ENCODE measurements at regions of chr11 and their contacts with region 1.

Region 1: DNA sequence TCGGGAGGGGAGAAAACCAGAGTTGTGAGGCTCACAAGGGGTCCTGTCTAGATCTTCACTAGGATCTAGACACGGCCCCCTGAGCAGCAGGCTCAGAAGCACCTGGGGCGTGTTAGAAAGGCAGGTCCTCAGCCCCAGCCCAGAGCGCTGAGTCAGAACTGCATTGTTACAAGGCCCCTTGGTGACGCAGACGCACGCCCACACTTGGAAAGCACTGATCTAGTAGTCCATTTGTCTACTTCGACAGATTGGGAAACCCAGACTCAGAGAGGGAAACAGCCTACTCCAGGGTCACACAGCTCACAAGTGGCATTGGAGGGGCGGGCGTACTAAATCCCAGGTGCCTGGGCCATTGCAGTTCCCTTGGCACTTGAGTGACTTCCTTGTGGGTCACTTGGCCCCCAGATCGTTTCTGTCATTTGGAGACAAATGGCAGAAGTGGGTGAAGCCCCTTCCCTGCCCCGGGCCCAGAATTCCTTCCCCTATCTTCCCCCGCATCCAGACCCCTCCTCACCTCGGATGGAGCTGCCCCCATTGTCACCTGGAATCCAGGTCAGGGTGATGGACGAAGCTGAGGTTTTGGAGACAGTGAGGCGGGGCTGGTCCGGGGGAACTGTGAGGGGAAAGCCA is 110.8 kb downstream of the CEP164 start:
- DNase-seq: no peak
- ATAC-seq: no peak
- H3K4me3 ChIP-seq: no peak overlapping the region
- H3K27ac ChIP-seq: no peak overlapping the region
- H3K4me1 ChIP-seq: no peaks in the 10 kb centered on the region
- H3K27me3 ChIP-seq: no peaks in the 10 kb centered on the region
- CTCF ChIP-seq: no peak
- POLR2A ChIP-seq: no peak

Region 2: GRCh38 chr11:116927163-116927974 is 511.1 kb before region 1 on chr11:
- intact Hi-C with region 1: no loop called
- DNase-seq: no peak
- ATAC-seq: no peak
- H3K4me3 ChIP-seq: no peak overlapping the region
- H3K27ac ChIP-seq: no peak overlapping the region
- H3K4me1 ChIP-seq: peaks cover 0 to 34% (median 16%) of the 10 kb centered on the region in 4 donors
- H3K27me3 ChIP-seq: no peaks in the 10 kb centered on the region
- CTCF ChIP-seq: peak in 3 of 4 donors; percentile 4 to 14 (median 12)
- POLR2A ChIP-seq: no peak

Region 3: GRCh38 chr11:117807482-117808327 is 369.2 kb after region 1 on chr11:
- intact Hi-C with region 1: loop called in 1 of 2 experiments (anchors 10 kb)
- DNase-seq: peak; percentile 67 to 71 (median 68)
- ATAC-seq: peak; percentile 77 to 87 (median 85)
- H3K4me3 ChIP-seq: no peak overlapping the region
- H3K27ac ChIP-seq: no peak overlapping the region
- H3K4me1 ChIP-seq: no peaks in the 10 kb centered on the region
- H3K27me3 ChIP-seq: no peaks in the 10 kb centered on the region
- CTCF ChIP-seq: peak; percentile 85 to 90 (median 87)
- POLR2A ChIP-seq: no peak